ENCODE measurements at regions of chr2 and their contacts with region 1.

Region 1: DNA sequence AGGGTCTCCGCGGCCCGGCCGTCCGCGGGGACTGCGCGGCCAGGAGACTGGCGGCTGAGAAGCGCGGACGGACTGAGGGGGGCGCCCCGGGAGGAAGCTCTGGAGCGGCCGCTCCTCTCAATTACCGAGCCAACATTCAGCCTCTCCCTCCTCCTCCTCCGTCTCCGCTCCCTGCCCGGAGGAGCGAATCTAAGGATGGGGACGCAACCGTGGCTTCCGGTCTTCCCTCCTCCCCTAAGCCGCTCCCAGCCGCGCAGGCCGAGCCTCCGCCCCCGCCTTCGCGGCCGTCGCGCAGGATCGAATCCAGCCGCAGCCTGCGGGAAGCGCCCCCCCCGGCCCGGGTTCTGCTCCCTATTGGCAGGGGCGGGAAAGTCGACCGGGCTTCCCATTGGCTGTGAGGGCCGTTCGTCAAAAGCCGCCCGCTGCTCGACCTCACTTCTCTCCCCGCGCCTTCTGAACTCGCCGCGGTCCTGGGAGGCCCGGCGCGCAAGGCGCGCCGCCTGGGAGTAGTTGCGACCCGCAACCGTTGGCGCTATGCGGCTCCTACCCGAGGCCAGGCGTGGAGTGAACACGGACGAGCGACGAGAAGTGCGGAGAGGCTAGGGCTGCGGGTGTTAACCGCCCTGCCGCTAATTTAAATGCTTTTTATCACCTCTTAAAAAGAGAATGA is at the start of gene HNRNPLL:
- DNase-seq: peak; percentile 99
- H3K4me3 ChIP-seq: peak within 1 kb of the TSS; percentile 66 to 97 (median 74)
- H3K27ac ChIP-seq: peak within 1 kb of the TSS; percentile 86 to 99 (median 95)
- H3K4me1 ChIP-seq: peaks cover 0 to 45% (median 35%) of the 10 kb centered on the region in 4 donors
- H3K27me3 ChIP-seq: no peaks in the 10 kb centered on the region
- CTCF ChIP-seq: no peak
- EP300 ChIP-seq: peak in 1 of 4 donors; percentile 67
- POLR2A ChIP-seq: peak; percentile 94 to 96
- total RNA-seq, gene HNRNPLL: 63.7 to 82.0 (median 72.5) TPM

Region 2: DNA sequence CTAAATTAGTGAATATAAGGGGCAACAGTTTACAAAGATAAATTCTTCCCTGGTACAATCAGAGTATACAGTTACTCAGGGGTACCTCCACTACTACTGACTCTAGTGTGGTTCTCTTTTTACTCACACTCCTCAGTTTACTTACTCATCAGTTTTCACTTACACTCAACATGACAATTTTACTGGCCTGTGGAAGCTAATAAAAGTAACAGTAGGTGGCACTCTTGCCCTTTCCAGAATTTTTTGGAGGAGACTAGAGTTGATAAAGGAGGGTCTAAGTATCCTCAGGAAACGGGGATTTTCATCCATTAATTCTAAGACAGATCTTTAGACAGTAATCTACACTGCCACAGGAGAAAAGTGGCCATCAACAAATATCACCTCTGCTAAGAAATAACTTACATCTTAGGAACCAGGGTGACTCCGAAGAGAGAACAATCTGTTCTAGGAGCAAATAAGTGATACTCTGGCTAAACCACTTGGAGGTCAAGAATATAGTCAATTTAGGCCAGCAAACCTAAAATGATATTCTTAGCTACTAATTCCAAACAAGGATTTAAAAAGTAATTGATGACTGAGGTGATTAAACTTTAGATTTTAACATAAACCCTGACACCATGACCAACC is 287.0 kb before region 1 on chr2:
- intact Hi-C with region 1: loop called (anchors 5 kb)
- DNase-seq: no peak
- H3K4me3 ChIP-seq: no peak overlapping the region
- H3K27ac ChIP-seq: peak overlapping the region; percentile 51 to 74 (median 67)
- H3K4me1 ChIP-seq: peaks cover 0 to 29% (median 27%) of the 10 kb centered on the region in 4 donors
- H3K27me3 ChIP-seq: no peaks in the 10 kb centered on the region
- CTCF ChIP-seq: peak; percentile 46 to 75 (median 64)
- EP300 ChIP-seq: peak in 1 of 4 donors; percentile 10
- POLR2A ChIP-seq: no peak

Region 3: GRCh38 chr2:38535744-38536506 is 66.9 kb before region 1 on chr2:
- intact Hi-C with region 1: loop called (anchors 5 kb)
- DNase-seq: peak; percentile 93
- H3K4me3 ChIP-seq: peak overlapping the region; percentile 43 to 54 (median 48)
- H3K27ac ChIP-seq: peak overlapping the region; percentile 75 to 88 (median 83)
- H3K4me1 ChIP-seq: peaks cover 0 to 40% (median 31%) of the 10 kb centered on the region in 4 donors
- H3K27me3 ChIP-seq: no peaks in the 10 kb centered on the region
- CTCF ChIP-seq: peak; percentile 82 to 95 (median 86)
- EP300 ChIP-seq: no peak
- POLR2A ChIP-seq: no peak

Region 4: DNA sequence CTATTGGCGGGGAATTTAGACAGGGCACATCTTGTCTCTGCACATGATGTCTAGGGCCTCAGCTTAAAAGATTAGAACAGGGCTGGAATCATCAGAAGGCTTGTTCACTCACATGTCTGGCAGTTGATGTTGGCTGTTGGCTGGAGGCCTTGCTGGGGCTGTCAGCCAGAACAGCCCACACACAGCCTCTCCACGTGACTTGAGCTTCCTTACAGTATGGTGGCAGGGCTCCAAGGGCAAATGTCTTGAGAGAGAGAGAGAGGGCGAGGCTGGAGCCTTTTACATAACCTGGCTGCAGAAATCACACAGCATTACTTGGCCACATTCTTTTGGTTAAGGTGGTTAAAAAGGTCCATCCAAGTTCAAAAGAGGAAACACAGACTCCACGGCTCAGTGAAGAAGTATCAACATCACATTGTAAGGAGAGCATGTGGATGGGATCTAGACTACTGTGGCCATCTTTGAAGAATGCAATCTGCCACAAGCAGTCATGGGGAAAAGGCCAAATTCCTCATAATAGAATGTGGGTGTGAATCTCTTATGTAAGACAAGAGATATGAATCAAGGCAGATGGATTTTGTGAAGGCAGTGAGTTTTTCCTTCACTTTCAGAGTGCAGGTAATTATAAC is 117.9 kb after region 1 on chr2:
- intact Hi-C with region 1: loop called (anchors 2 kb)
- DNase-seq: peak; percentile 92
- H3K4me3 ChIP-seq: no peak overlapping the region
- H3K27ac ChIP-seq: peak overlapping the region; percentile 32 to 67 (median 54)
- H3K4me1 ChIP-seq: peaks cover 0 to 23% (median 13%) of the 10 kb centered on the region in 4 donors
- H3K27me3 ChIP-seq: no peaks in the 10 kb centered on the region
- CTCF ChIP-seq: no peak
- EP300 ChIP-seq: peak in 1 of 4 donors; percentile 64
- POLR2A ChIP-seq: no peak

Region 5: DNA sequence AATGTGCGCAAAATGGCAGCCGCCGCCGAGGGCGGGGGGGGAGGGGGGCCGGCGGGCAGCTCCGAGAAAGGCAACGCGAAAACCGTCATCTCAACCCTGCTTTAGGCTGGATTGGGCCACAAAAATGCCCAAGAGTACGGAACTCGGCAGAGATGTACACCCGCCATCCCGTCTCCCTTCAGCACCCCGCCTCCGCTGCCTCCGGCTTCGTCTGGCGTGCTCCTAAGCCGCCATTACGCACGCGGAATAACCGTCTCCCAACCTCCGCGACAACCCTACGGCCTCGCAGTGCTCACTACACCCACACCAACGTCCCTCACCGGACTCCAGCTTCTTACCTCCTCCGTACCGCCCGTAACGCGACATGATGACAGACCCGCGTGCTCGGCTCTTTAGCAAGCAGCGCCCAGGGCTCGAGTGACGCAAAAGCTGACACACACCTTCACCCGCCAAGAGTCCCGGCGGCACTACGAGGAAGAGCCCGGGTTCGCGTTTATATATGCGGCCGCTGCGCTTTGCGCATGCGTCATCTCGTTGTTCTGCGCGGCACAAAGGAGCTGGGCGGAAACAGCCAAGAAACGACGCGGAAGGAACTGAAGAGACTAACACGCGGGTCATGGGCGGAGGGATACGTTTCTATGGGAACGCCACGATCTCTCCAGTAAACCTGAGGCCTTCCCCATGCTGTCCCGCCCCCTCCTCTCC is 148.2 kb after region 1 on chr2 and contains the start of gene SRSF7:
- intact Hi-C with region 1: loop called (anchors 2 kb)
- DNase-seq: peak; percentile 99
- H3K4me3 ChIP-seq: peak within 1 kb of the TSS; percentile 69 to 97 (median 84)
- H3K27ac ChIP-seq: peak within 1 kb of the TSS; percentile 92 to 99 (median 97)
- H3K4me1 ChIP-seq: peaks cover 0 to 45% (median 41%) of the 10 kb centered on the region in 4 donors
- H3K27me3 ChIP-seq: no peaks in the 10 kb centered on the region
- CTCF ChIP-seq: no peak
- EP300 ChIP-seq: peak in 1 of 4 donors; percentile 26
- POLR2A ChIP-seq: peak; percentile 100
- total RNA-seq, gene SRSF7: 73.1 to 140 (median 97.0) TPM

Region 6: GRCh38 chr2:38876407-38876806 is 273.5 kb after region 1 on chr2:
- intact Hi-C with region 1: no loop called
- DNase-seq: no peak
- H3K4me3 ChIP-seq: peak overlapping the region; percentile 69 to 87 (median 82)
- H3K27ac ChIP-seq: peak overlapping the region in 3 of 4 donors; percentile 78 to 84 (median 78)
- H3K4me1 ChIP-seq: peaks cover 0 to 18% (median 14%) of the 10 kb centered on the region in 4 donors
- H3K27me3 ChIP-seq: no peaks in the 10 kb centered on the region
- CTCF ChIP-seq: no peak
- EP300 ChIP-seq: no peak
- POLR2A ChIP-seq: no peak

Measured in sigmoid colon (tissue), 7 donors.